Activated T-helper 2 cell treated with anti-CD3 and anti-CD28 coated beads, Interferon-gamma antibody, Interleukin-2, Interleukin-4, amounts not matched to agents 10 μg/mL and 5 μg/mL and 100 μg/mL, durations not matched to agents 14 hours and 24 hours and 36 hours (primary cell): ENCODE measurements at regions of chr20 and their contacts with region 1.

Region 1: DNA sequence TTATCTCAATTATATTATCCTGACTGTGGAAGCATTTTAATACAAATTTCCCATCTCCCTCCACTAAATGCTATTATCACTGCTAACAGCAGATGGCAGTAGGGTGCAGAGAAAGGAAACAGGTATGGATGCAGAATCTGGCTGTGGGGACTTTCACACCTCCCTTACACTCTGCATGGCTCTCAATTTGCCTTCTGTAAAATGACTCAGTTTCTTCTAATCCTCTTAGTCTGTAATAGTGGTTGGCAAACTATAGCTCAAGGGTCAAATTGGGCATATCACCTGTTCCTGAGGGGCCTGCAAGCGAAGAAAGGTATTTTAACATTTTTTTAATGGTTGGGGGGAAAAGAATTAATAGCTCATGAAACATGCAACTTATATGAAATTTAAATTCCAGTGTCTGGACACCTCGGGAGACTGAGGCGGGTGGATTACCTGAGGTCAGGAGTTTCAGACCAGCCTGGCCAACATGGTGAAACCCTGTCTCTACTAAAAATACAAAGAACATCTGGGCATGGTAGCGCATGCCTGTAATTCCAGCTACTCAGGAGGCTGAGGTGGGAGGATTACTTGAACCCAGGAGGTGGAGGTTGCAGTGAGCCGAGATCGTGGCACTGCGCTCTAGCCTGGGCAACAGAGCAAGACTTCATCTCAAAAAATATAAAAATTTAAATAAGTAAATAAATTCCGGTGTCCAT is 83.5 kb downstream of the ZMYND8 start:
- DNase-seq: peak; percentile 33
- H3K4me3 Mint-ChIP-seq: peak overlapping the region; percentile 52
- H3K27ac Mint-ChIP-seq: peak overlapping the region; percentile 88
- H3K4me1 Mint-ChIP-seq: peaks cover 40% of the 10 kb centered on the region
- H3K27me3 Mint-ChIP-seq: no peaks in the 10 kb centered on the region

Region 2: GRCh38 chr20:47317127-47317895 is 44.3 kb after region 1 on chr20:
- intact Hi-C with region 1: loop called (anchors 2 kb)
- DNase-seq: peak; percentile 38
- H3K4me3 Mint-ChIP-seq: no peak overlapping the region
- H3K27ac Mint-ChIP-seq: peak overlapping the region; percentile 87
- H3K4me1 Mint-ChIP-seq: peaks cover 51% of the 10 kb centered on the region
- H3K27me3 Mint-ChIP-seq: no peaks in the 10 kb centered on the region

Region 3: GRCh38 chr20:47356526-47357295 is 83.7 kb after region 1 on chr20 and contains the start of gene ZMYND8:
- intact Hi-C with region 1: loop called (anchors 2 kb)
- DNase-seq: peak; percentile 97
- H3K4me3 Mint-ChIP-seq: peak within 1 kb of the TSS; percentile 86
- H3K27ac Mint-ChIP-seq: peak within 1 kb of the TSS; percentile 100
- H3K4me1 Mint-ChIP-seq: peaks cover 51% of the 10 kb centered on the region
- H3K27me3 Mint-ChIP-seq: no peaks in the 10 kb centered on the region
- total RNA-seq, gene ZMYND8: 45.7 and 46.7 TPM in 2 replicates

Region 4: DNA sequence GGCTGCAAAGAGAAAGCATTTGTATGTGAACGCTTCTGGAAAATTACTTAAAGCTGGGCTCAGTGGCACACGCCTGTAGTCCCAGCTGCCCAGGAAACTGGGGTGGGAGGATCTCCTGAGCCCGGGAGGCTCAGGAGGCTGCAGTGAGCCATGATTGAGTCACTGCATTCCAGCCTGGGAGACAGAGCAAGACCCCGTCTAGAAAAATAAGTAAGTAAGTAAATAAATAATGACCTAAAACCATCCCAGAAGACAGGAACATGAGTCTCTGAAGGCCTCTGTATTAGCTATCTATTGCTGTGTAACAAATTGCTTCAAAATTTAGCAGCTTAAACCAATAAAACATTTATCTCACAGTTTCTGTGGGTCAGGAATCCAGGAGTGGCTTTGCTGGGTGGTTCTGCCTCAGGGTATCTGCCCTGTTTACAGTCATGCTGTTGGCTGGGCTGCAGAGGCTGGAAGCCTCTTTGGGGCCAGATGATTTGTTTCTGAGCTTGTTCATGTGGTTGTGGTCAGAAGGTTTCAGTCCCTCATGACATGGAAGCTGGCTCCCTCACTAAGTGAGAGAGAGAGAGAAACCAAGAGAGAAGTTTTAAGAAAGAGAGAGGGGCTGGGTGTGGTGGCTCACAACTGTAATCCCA is 180.2 kb after region 1 on chr20:
- intact Hi-C with region 1: loop called (anchors 5 kb)
- DNase-seq: peak; percentile 58
- H3K4me3 Mint-ChIP-seq: no peak overlapping the region
- H3K27ac Mint-ChIP-seq: peak overlapping the region; percentile 78
- H3K4me1 Mint-ChIP-seq: peaks cover 47% of the 10 kb centered on the region
- H3K27me3 Mint-ChIP-seq: no peaks in the 10 kb centered on the region

Region 5: DNA sequence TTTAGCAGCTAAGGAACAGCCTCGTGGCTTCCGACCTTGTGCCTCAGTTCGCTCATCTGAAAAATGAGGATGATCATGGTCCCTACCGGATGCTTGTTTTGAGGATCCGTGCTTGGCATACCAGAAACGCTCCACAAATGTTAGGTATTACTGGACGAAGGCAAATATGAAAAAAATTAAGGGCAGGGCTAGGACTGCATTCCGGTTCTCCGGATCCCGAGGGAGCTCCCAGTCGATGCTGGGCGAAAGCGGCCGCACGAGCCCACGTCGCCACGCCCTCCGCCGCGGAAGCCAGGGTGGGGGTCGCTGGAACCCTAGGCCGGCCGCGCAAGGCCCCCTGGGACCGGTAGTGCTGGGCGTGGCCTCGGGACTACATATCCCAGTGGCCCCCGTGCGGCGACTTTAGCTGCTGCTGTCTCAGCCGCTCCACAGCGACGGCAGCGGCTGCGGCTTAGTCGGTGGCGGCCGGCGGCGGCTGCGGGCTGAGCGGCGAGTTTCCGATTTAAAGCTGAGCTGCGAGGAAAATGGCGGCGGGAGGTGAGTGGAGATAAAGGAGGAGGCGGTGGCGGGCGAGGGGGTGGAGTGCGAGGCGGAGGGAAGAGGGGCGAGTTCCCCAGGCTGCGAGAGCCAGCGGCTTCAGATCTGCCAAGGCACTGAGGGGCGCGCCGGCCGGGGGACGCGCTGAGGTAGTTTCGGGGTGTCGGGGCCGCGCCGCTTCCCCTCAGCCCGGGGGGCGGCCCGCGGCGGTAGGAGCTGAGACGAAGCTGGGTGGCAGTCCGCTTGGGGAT is 228.6 kb after region 1 on chr20 and contains the start of gene NCOA3:
- intact Hi-C with region 1: loop called (anchors 5 kb)
- DNase-seq: peak; percentile 91
- H3K4me3 Mint-ChIP-seq: peak within 1 kb of the TSS; percentile 100
- H3K27ac Mint-ChIP-seq: peak within 1 kb of the TSS; percentile 99
- H3K4me1 Mint-ChIP-seq: peaks cover 49% of the 10 kb centered on the region
- H3K27me3 Mint-ChIP-seq: no peaks in the 10 kb centered on the region
- total RNA-seq, gene NCOA3: 119 and 126 TPM in 2 replicates